Endothelial cell of umbilical vein (primary cell): ENCODE measurements at regions of chr2 and their contacts with region 1.

Region 1: GRCh38 chr2:85797921-85798320 is 44.1 kb downstream of the ATOH8 start:
- DNase-seq: peak; percentile 60
- H3K4me3 ChIP-seq: no peak overlapping the region
- H3K27ac ChIP-seq: no peak overlapping the region
- H3K4me1 ChIP-seq: peaks cover 15% of the 10 kb centered on the region
- H3K27me3 ChIP-seq: no peaks in the 10 kb centered on the region
- CTCF ChIP-seq: peak; percentile 62 to 70
- POLR2A ChIP-seq: no peak

Region 2: DNA sequence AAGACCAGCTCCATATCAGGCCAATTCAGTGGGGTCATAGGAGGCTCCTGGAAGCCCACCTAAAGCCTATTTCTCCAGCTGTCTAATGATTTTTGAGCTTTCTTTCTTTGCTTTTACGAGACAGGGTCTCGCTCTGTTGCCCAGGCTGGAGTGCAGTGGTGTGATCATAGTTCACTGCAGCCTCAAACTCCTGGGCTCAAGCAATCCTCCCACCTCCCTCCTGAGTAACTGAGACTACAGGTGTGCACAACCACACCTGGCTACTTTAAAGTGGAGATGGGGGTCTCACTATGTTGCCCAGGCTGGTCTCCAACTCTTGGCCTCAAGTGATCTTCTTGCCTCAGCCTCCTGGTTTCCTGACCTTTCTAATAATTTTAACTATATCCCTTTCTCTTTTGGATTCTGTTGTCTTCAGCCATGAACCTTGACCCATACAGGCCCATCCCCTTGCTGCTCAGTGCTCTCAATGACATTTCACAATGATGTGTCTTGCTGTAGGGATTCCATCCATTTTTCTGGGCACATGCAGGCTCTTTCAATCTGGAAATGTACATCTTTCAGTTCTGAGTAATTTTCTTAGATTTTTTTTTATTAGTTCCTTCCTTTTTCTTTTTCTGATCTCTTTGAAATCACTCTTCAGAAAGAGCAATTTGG is 74.1 kb before region 1 on chr2:
- CTCF ChIA-PET with region 1: interaction called, 42 read pairs
- POLR2A ChIA-PET with region 1: no interaction called
- dilution Hi-C with region 1: loop called (anchors 25 kb)
- intact Hi-C with region 1: loop called (anchors 1 kb)
- DNase-seq: no peak
- H3K4me3 ChIP-seq: no peak overlapping the region
- H3K27ac ChIP-seq: no peak overlapping the region
- H3K4me1 ChIP-seq: no peaks in the 10 kb centered on the region
- H3K27me3 ChIP-seq: peaks cover 0 to 8% of the 10 kb centered on the region in 2 experiments
- CTCF ChIP-seq: no peak
- POLR2A ChIP-seq: no peak

Region 3: DNA sequence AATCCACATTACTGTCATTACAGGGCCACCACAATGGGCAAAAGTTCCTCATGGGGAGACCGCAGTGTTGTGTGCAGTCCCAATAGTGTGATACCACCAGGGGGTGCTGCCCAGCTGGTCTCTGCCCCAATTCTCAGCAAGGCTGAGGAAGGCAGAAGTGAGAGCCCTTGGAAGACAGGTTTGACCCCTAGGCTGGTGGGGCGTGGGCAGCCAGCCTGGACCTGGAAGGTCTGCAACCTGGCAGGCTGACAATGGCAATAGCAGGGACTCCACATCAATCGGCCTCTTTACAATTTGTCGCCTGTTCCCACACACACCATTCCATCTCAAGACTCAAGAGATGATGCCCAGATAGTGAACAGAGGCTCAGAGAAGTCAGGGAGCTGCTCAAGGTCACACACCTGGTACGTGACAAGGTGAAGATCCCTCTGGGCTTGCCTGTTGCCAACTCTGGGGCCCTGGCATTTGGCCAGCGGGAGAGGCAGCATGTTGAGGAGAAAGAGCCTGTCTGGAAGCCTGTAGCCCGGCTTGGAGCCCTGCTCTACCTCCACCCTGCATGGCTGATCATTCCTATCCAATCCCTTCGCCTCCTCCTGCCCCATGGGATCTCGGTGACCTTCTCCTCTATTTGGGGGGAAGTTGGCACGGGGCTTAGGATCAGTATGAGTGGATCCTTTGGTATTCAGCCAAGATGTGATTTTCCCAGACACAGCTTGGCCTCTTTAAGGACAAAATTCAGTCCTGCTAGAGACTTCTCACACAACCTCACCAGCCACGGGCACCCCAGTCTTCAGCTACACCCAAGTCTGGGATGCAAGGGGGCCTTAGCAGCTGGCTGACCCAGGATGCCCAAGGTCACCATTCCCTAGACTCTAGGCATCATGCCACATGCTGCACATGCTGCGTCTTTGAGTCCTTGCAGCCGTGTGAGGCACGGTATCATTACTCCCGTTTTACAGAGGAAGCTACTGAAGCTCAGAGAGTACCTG is 47.0 kb before region 1 on chr2:
- CTCF ChIA-PET with region 1: interaction called, 126 read pairs
- POLR2A ChIA-PET with region 1: interaction called, 9 read pairs
- dilution Hi-C with region 1: no loop called
- intact Hi-C with region 1: loop called (anchors 1 kb)
- DNase-seq: peak; percentile 72
- H3K4me3 ChIP-seq: no peak overlapping the region
- H3K27ac ChIP-seq: no peak overlapping the region
- H3K4me1 ChIP-seq: peaks cover 6% of the 10 kb centered on the region
- H3K27me3 ChIP-seq: no peaks in the 10 kb centered on the region
- CTCF ChIP-seq: peak; percentile 83 to 85
- POLR2A ChIP-seq: no peak

Region 4: DNA sequence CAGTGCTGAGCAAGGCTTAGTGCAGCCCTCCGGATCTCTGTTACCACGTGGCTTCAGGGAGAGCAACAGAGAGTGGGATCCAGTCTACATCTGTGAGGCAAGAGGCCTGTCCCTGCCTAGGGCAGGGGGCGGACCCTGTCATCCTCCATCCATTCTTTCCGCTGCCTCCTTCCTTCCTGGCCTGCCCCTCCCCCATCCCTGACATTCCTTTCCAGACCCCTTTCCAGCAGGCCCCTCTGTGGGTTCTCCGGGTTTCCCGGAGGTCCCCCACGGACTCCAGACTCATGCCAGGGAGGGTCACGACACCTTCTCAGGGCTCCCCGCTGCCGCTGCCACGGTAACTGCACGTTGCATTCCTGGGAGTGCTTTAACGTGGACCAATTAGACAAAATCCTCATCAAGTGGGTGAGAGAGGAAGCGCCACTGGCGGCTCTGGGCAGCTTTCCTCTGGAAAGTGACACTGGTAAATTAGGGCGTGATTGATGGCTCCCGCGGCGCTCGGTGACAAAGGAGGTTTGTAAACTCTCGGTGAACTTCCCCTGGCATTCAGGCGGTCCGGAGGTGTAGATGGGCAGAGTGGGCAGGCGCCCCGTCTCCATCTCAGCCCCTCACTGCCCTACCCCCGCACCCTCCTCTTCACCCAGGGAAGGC is 32.7 kb before region 1 on chr2:
- CTCF ChIA-PET with region 1: interaction called, 50 read pairs
- POLR2A ChIA-PET with region 1: no interaction called
- dilution Hi-C with region 1: no loop called
- intact Hi-C with region 1: no loop called
- DNase-seq: peak; percentile 30
- H3K4me3 ChIP-seq: no peak overlapping the region
- H3K27ac ChIP-seq: peak overlapping the region; percentile 40
- H3K4me1 ChIP-seq: peaks cover 35% of the 10 kb centered on the region
- H3K27me3 ChIP-seq: no peaks in the 10 kb centered on the region
- CTCF ChIP-seq: no peak
- POLR2A ChIP-seq: no peak

Region 5: GRCh38 chr2:85936421-85937068 is 138.6 kb after region 1 on chr2:
- CTCF ChIA-PET with region 1: no interaction called
- POLR2A ChIA-PET with region 1: no interaction called
- dilution Hi-C with region 1: no loop called
- intact Hi-C with region 1: no loop called
- DNase-seq: no peak
- H3K4me3 ChIP-seq: no peak overlapping the region
- H3K27ac ChIP-seq: no peak overlapping the region
- H3K4me1 ChIP-seq: peaks cover 37% of the 10 kb centered on the region
- H3K27me3 ChIP-seq: no peaks in the 10 kb centered on the region
- CTCF ChIP-seq: no peak
- POLR2A ChIP-seq: no peak